Transverse colon (tissue), 4 donors: ENCODE measurements at regions of chr1 and their contacts with region 1.

Region 1: GRCh38 chr1:176801514-176802020 is 338.6 kb downstream of the PAPPA2 start:
- DNase-seq: no peak
- H3K4me3 ChIP-seq: no peak overlapping the region
- H3K27ac ChIP-seq: no peak overlapping the region
- H3K4me1 ChIP-seq: no peaks in the 10 kb centered on the region
- H3K27me3 ChIP-seq: no peaks in the 10 kb centered on the region
- CTCF ChIP-seq: no peak
- EP300 ChIP-seq: no peak
- POLR2A ChIP-seq: no peak

Region 2: DNA sequence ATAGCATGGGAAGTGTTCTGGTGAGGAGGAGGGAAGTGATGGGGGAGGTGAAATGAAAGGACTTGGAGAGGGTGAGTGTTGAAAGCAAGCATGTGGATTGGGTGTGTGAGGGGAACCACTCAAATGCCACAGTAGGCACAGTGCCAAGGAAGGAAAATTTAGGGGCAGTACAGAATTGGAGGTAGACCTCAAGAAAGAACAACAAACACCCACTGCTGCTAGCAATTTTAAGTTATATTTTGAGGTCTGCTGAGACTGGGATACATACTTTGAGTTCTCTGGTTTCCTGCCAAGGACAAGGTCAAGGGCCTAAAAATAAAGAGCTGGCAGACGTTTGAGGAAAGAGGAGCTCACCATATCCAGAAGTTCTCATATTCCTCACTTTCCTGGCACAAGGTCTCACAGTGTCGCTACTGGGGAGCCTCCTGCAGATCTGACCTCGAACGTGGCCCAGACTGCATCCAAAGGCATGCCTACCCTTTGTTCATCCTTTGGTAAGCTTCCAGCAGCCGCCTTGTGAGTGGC is 473.2 kb after region 1 on chr1:
- in situ Hi-C with region 1: no loop called
- intact Hi-C with region 1: loop called (anchors 5 kb)
- DNase-seq: no peak
- H3K4me3 ChIP-seq: no peak overlapping the region
- H3K27ac ChIP-seq: peak overlapping the region in 3 of 4 donors; percentile 14 to 28 (median 23)
- H3K4me1 ChIP-seq: peaks cover 0 to 10% (median 3%) of the 10 kb centered on the region in 4 donors
- H3K27me3 ChIP-seq: no peaks in the 10 kb centered on the region
- CTCF ChIP-seq: no peak
- EP300 ChIP-seq: no peak
- POLR2A ChIP-seq: no peak

Region 3: DNA sequence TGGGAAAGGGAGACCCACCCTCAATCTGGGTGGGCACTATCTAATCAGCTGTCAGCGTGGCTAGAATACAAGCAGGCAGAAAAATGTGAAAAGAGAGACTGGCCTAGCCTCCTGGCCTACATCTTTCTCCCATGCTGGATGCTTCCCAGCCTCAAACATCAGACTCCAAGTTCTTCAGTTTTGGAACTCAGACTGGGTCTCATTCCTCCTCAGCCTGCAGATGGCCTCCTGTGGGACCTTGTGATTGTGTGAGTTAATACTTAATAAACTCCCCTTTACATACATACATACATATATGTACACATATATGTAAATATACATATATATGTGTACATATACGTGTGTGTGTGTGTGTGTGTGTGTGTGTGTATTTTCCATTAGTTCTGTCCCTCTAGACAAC is 576.3 kb after region 1 on chr1:
- in situ Hi-C with region 1: no loop called
- intact Hi-C with region 1: no loop called
- DNase-seq: no peak
- H3K4me3 ChIP-seq: no peak overlapping the region
- H3K27ac ChIP-seq: no peak overlapping the region
- H3K4me1 ChIP-seq: no peaks in the 10 kb centered on the region
- H3K27me3 ChIP-seq: no peaks in the 10 kb centered on the region
- CTCF ChIP-seq: no peak
- EP300 ChIP-seq: no peak
- POLR2A ChIP-seq: no peak